Panc1 (cell line): ENCODE measurements at regions of chr2 and their contacts with region 1.

Region 1: DNA sequence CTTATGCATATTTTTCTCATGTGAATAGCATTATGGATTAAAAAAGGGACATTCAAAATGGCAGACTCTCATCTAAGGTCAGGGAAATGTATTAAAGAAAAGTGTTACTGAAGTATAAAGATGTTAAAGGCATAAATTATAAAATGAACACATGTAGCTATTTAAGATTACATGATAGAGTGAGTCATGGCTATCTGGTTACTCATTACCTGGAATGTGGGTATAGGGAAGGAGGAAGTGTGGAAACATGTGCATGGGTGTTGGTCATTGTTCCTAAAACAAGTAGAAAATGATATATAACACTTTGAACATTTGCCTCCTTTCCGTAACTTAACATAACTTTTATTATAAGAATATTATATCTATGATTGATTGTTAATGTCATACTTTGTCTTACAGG is 66.4 kb downstream of the MYO1B start:
- DNase-seq: peak; percentile 33
- ATAC-seq: peak; percentile 70; the same call in 1 of the 2 replicates
- H3K4me3 ChIP-seq: no peak overlapping the region
- H3K27ac ChIP-seq: no peak overlapping the region
- H3K4me1 ChIP-seq: no peaks in the 10 kb centered on the region
- H3K27me3 ChIP-seq: no peaks in the 10 kb centered on the region
- CTCF ChIP-seq: no peak

Region 2: DNA sequence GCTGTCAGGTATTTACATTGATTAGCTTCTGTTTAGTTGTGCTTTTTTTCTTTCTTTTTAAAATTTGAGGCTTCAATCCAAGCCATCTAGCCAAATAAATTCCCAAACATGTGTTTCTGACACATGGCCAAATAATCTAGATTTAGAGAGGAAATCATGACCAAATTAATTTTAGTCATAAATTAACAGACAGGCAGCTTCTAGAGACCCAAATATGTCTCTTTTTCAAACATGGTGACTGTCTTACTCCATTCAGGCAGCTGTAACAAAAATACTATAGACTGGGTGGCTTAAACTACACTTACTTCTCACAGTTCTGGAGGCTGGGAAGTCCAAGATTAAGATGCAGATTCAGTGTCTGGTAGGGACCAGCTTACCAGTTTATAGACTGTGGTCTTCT is 685.9 kb before region 1 on chr2:
- CTCF ChIA-PET with region 1: no interaction called
- POLR2A ChIA-PET with region 1: interaction called, 14 read pairs
- in situ Hi-C with region 1: no loop called
- intact Hi-C with region 1: no loop called
- DNase-seq: no peak
- ATAC-seq: no peak
- H3K4me3 ChIP-seq: no peak overlapping the region
- H3K27ac ChIP-seq: no peak overlapping the region
- H3K4me1 ChIP-seq: peaks cover 6% of the 10 kb centered on the region; the same call in 1 of the 2 replicates
- H3K27me3 ChIP-seq: no peaks in the 10 kb centered on the region
- CTCF ChIP-seq: no peak

Region 3: DNA sequence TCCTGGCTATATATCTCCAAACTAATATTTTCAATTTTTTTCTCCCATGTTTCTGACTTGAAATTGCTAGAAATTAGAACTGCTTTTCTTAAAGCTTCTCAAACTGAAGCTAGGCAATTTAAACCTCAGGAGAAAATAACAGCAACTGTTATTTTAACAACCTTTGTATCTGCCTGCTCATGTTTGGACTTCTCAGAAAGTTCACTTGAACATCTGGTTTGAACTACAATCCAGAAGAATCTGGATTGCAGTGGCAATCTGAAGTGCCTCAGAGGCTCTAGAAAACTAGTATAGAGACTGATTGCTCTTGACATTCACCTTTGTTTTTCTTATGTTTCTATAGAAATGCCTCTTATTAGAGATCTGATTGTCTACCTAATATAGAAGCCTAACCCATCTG is 224.9 kb before region 1 on chr2:
- CTCF ChIA-PET with region 1: no interaction called
- POLR2A ChIA-PET with region 1: no interaction called
- in situ Hi-C with region 1: no loop called
- intact Hi-C with region 1: no loop called
- DNase-seq: no peak
- ATAC-seq: no peak
- H3K4me3 ChIP-seq: no peak overlapping the region
- H3K27ac ChIP-seq: no peak overlapping the region
- H3K4me1 ChIP-seq: no peaks in the 10 kb centered on the region
- H3K27me3 ChIP-seq: no peaks in the 10 kb centered on the region; the same call in 1 of the 2 replicates
- CTCF ChIP-seq: no peak

Region 4: DNA sequence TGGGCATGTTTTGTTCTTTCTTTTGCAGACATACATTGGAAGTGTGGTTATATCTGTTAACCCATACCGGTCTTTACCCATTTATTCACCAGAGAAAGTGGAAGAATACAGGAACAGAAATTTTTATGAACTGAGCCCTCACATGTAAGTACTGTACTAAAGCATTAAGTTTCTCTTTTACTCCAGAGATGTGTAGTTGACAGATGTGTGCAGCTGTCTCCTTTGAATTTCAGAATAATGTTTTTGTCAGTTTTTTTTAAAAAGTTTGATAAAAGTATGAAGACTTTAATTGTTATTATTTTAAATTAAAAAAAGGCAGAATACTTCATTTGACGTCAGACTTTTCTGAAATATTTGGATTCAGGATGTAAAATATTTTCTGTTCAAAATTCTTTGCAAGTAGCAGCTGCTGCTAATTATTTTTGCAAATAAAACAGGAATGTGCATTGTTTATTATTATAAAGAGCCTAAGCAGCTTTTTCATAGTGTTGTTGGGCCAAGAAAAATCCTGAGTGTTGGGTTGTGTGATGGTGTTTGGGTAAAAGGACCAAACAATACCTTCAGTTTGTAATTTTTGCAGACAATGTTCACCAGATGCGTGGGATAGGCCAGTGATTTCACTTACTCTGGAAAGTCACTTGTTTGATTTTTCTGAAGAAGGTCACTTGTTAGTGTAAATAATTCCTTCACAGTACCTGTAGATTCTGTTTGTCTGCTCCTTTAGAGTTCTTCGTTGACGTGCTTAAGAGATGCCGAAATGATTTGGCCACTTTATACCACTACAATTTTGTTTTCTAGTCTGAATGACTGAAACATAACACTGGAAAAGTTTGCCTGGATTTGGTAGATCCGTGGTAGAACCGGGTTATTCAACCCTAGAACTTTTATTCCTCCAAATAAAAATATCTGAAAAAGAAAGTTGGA is 15.3 kb before region 1 on chr2:
- CTCF ChIA-PET with region 1: no interaction called
- POLR2A ChIA-PET with region 1: no interaction called
- in situ Hi-C with region 1: no loop called
- intact Hi-C with region 1: no loop called
- DNase-seq: no peak
- ATAC-seq: no peak
- H3K4me3 ChIP-seq: no peak overlapping the region
- H3K27ac ChIP-seq: no peak overlapping the region
- H3K4me1 ChIP-seq: no peaks in the 10 kb centered on the region; the same call in 1 of the 2 replicates
- H3K27me3 ChIP-seq: no peaks in the 10 kb centered on the region
- CTCF ChIP-seq: no peak